BJ (cell line): ENCODE measurements at regions of chr15 and their contacts with region 1.

Region 1: DNA sequence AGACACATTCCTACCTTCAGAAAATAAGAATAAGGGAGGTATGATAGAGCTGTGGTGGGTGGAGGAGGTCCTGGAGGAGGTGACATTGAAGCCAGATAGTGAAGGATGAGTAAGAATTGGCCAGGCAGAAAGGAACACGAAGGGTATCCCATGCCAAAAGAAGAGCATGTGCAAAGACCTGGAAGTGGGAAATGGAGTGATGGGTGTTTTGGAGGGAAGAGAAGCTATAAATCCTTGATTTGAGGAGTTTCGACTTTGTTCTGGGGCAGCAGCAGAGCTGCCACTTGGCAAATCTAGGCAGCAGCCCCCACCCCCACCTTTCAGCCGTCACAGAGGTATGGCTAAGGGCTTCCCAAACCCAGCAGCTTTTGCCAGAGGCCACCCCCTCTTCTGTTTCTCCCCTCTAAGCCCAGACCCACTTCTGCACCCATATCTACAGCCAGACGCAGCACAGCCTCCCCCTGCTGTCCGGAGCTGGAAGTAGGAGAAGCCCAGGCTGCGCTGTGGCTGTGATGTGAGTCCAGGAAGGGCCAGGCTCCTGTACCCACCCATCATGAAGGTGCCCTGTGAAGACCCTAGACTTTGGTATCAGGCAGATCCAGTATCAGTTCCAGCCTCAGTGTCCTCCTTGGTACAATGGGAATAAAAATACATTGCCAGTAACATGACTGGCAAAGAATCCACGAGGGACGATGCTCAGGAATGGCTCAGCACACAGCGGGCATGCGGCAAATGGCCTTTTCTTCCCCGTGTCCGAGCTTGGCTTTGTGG is 188.7 kb upstream of the LINGO1 start:
- DNase-seq: no peak
- H3K4me3 ChIP-seq: no peak overlapping the region
- H3K27me3 ChIP-seq: peaks cover 43% of the 10 kb centered on the region
- CTCF ChIP-seq: peak; percentile 94

Region 2: DNA sequence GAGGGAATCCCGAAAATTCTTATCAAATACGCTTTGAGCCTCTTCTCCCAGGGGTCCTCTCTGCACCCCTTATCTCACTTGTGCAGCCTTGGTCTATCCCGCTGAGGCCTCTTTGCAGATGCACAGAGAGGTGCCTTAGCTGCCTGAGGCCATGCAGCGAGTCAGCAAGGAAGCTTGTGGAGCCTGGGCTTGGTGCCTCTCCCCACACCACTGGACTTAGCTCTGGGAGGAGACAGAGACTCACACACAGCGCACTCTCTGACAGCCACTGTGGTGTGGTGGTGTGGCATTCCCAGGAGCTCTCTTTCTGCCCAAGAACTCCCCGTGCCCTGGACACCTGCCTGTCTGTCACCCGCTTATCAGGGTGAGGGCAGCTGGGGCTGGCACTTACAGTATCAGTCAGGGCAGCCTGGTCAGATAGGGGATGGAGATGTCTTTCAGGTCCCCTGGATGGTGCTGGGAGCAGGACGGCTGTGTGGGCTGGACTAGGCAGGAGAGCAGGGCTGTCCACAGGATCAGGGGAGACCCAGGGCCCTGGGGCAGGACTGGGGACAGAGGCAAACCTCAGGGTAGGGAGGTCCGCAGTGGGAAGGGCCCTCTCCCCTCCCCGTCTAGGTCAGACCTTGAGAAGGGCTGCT is 178.5 kb before region 1 on chr15:
- CTCF ChIA-PET with region 1: interaction called, 10 read pairs
- POLR2A ChIA-PET with region 1: no interaction called
- DNase-seq: no peak
- H3K4me3 ChIP-seq: no peak overlapping the region
- H3K27me3 ChIP-seq: peaks cover 6% of the 10 kb centered on the region
- CTCF ChIP-seq: no peak

Region 3: GRCh38 chr15:77798151-77798835 is 23.1 kb before region 1 on chr15:
- CTCF ChIA-PET with region 1: interaction called, 13 read pairs
- POLR2A ChIA-PET with region 1: no interaction called
- DNase-seq: no peak
- H3K4me3 ChIP-seq: no peak overlapping the region
- H3K27me3 ChIP-seq: peaks cover 7% of the 10 kb centered on the region
- CTCF ChIP-seq: no peak